ENCODE measurements at regions of chr6 and their contacts with region 1.

Region 1: GRCh38 chr6:36052097-36052496 is 24.5 kb downstream of the MAPK14 start:
- DNase-seq: no peak
- CTCF ChIP-seq: no peak

Region 2: DNA sequence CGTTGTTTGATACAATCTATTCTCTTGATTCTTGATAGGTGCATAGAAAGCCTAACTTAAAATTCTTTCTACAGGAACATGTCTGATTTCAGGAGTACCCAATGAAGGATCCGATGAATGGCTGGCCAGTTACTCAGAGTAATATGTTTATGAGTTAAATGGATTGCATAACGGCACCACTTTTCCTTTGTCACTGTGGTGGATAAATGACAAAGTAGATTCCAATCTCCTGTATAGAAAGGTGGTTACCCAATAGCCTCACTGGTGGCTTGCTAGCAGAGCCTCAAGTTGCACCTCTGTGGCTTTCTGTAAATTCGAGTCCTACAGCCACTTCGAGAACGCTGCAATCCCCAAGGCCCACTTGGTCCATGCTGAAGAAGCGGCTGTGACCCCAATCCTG is 218.6 kb before region 1 on chr6:
- CTCF ChIA-PET with region 1: no interaction called
- POLR2A ChIA-PET with region 1: no interaction called
- DNase-seq: no peak
- CTCF ChIP-seq: no peak

Region 3: GRCh38 chr6:36027501-36028087 is 24.5 kb before region 1 on chr6 and contains the start of gene MAPK14:
- CTCF ChIA-PET with region 1: interaction called, 13 read pairs
- POLR2A ChIA-PET with region 1: interaction called, 4 read pairs
- DNase-seq: peak; percentile 98
- CTCF ChIP-seq: peak; percentile 87

Region 4: DNA sequence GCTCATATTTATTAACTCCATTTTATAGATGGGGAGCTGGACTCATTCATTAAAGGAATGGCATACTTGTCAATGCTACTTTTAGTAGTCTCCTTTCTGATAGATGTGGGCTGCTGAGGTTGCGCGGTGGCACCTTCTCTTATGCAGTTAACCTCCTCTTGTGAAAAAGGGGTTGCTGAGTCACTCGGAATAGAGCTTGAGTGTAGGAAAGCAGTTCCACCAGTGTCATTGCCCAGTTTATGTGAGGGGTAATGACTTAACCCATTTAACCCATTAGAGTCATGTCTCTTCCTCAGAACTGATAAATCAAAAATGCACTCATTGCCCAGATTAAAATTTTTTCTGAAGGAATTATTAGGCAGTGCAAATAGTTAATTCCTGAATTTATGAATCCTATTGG is 18.2 kb before region 1 on chr6:
- CTCF ChIA-PET with region 1: interaction called, 13 read pairs
- POLR2A ChIA-PET with region 1: interaction called, 4 read pairs
- DNase-seq: no peak
- CTCF ChIP-seq: no peak

Measured in GM10248 (cell line).